ENCODE measurements at regions of chr11 and their contacts with region 1.

Region 1: DNA sequence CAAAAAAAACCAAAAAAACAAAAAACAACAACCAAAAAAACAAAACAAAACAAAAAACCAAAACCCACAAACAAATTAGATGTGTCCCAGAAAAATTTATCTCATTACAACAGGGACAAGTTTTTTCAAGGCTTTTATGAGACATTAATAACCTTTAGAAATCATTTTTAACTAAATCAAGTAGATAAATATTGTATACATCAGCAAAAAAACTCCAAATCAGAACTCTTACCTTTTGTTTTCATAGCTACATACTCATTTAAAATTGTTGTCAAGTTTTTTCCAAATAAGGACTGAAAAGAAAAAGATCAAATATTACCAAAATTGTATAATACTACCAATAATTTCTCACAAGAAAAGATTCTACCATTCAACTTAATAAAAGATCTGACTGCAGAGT is 28.7 kb downstream of the NPAT start:
- DNase-seq: no peak
- H3K4me3 ChIP-seq: no peak overlapping the region
- CTCF ChIP-seq: no peak

Region 2: GRCh38 chr11:108135845-108136544 is 57.7 kb before region 1 on chr11:
- in situ Hi-C with region 1: no loop called
- DNase-seq: no peak
- H3K4me3 ChIP-seq: no peak overlapping the region
- CTCF ChIP-seq: peak; percentile 20

Region 3: GRCh38 chr11:108222686-108223448 is 29.1 kb after region 1 on chr11 and contains the start of gene ATM:
- in situ Hi-C with region 1: loop called (anchors 5 kb)
- DNase-seq: peak; percentile 98
- H3K4me3 ChIP-seq: peak within 1 kb of the TSS; percentile 84
- CTCF ChIP-seq: peak; percentile 84

Measured in astrocyte of the cerebellum (primary cell).